Activated T-helper 1 cell treated with anti-CD3 and anti-CD28 coated beads, Interleukin-12 subunit alpha, Interleukin-12 subunit beta, Interleukin-2, Interleukin-4 antibody, amounts not matched to agents 30 ng/mL and 10 ng/mL and 1 ng/mL, durations not matched to agents 14 hours and 24 hours and 36 hours (primary cell): ENCODE measurements at regions of chr1 and their contacts with region 1.

Region 1: DNA sequence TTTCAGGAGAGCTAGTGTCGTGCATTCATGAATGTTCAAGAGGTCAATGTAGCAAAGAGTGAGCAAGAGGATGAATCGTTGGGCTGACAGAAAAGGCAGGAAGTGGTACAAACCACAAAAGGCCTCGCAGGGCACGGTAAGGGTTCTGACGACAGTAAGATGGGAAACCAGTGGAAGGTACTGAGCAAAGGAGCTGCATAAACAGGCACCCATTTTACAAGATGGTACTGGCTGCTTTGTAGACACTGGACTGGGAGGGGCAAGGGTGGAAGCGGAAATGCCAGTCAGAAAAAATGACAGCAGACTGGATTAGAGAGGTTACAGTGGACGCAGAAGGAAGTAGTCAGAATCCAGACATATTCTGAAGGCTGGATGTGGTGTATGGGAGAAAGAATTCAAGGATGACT is 123.5 kb downstream of the PTPN14 start:
- DNase-seq: peak; percentile 77
- H3K4me3 Mint-ChIP-seq: peak overlapping the region; percentile 56
- H3K27ac Mint-ChIP-seq: peak overlapping the region; percentile 98
- H3K4me1 Mint-ChIP-seq: peaks cover 53% of the 10 kb centered on the region
- H3K27me3 Mint-ChIP-seq: no peaks in the 10 kb centered on the region

Region 2: GRCh38 chr1:214281021-214281719 is 146.7 kb before region 1 on chr1 and contains the start of gene SMYD2:
- intact Hi-C with region 1: loop called (anchors 5 kb)
- DNase-seq: peak; percentile 59
- H3K4me3 Mint-ChIP-seq: peak within 1 kb of the TSS; percentile 94
- H3K27ac Mint-ChIP-seq: peak within 1 kb of the TSS; percentile 92
- H3K4me1 Mint-ChIP-seq: peaks cover 42% of the 10 kb centered on the region
- H3K27me3 Mint-ChIP-seq: peaks cover 2% of the 10 kb centered on the region
- total RNA-seq, gene SMYD2: 25.7 and 26.8 TPM in 2 replicates

Region 3: DNA sequence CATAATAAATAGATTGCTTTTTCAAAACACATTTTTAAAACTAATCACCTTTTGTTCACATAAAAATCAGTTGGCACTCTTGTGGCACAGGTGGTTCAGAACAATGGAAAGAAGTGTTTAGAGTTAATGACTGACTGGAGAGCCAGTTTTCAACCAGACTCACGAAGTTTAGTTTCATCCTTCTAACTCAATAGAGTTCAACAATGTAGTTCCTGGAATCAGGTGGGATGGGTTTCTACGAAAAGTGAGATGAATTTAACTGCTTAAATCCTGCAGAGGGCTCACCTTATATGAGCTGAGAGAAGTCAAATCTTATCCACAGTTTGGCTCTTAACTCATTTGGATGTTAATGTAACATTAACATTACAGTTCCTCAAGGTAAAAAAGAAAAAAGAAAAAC is 30.4 kb before region 1 on chr1:
- intact Hi-C with region 1: loop called (anchors 2 kb)
- DNase-seq: no peak
- H3K4me3 Mint-ChIP-seq: no peak overlapping the region
- H3K27ac Mint-ChIP-seq: peak overlapping the region; percentile 68
- H3K4me1 Mint-ChIP-seq: peaks cover 44% of the 10 kb centered on the region
- H3K27me3 Mint-ChIP-seq: no peaks in the 10 kb centered on the region

Region 4: GRCh38 chr1:214413315-214413714 is 14.6 kb before region 1 on chr1:
- intact Hi-C with region 1: loop called (anchors 2 kb)
- DNase-seq: no peak
- H3K4me3 Mint-ChIP-seq: no peak overlapping the region
- H3K27ac Mint-ChIP-seq: no peak overlapping the region
- H3K4me1 Mint-ChIP-seq: peaks cover 34% of the 10 kb centered on the region
- H3K27me3 Mint-ChIP-seq: peaks cover 3% of the 10 kb centered on the region

Region 5: DNA sequence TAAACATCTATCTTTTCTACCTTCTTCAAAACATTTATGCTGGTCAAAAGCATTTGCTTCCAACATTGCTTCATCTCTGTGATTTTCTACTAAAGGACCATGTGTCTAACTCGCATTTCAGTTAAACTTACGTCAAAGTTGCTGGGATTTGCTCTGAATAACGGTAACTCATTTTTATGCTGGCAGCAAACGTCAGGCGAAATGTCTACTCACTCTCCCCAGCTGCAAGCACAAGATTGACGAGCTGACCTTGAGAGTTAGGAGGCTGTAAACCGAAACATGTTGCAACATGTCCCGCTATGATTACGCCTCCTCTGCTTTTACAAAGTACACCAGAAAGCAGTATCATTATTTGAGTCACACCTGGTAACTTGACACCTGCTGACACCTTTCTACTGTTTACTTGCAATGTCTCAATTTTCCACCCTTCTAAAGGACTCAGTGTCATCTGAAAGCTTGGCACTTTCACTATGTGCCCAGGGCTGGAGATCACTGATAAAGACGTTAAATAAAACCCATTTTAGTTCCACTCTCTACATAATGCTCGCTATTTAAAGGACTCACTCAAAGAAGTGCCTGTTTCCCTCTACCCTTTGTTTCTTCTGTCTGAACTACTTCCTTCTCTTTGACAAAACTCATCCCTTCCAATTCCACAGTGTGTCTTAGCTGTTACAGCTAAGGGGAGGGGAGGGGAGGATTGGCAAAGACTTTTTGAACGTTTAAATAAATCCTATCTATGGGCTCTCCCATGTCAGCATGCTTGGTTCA is 11.7 kb after region 1 on chr1:
- intact Hi-C with region 1: loop called (anchors 1 kb)
- DNase-seq: peak; percentile 52
- H3K4me3 Mint-ChIP-seq: peak overlapping the region; percentile 66
- H3K27ac Mint-ChIP-seq: peak overlapping the region; percentile 95
- H3K4me1 Mint-ChIP-seq: peaks cover 64% of the 10 kb centered on the region
- H3K27me3 Mint-ChIP-seq: no peaks in the 10 kb centered on the region

Region 6: DNA sequence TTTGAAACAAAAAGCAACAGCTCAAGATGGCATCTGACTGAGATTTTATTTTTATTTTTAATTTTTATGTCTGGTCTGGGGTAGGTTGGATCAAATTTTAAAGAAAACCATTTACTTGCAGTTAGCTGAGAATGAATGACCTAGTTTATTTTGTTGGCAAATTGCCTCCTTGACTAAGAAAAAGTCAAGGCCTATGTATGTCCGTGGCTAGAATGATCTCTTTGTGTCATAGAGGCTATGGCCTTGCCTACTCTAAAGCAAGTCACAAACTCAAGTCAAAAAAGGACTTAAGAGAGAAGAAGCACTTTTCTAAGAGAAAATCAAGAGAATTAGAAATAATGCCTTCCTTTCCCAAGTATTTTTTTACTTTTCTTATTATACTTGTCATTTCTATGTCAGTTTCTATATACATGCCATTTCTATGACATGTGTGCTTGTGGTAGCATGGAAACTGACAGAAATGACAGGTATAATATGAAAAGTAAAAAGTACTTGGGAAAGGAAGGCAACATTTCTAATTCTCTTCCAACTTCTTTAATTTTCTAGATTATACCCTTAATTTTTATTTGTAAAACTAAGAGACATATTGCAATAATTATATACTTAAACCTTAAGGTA is 311.9 kb after region 1 on chr1:
- intact Hi-C with region 1: no loop called
- DNase-seq: no peak
- H3K4me3 Mint-ChIP-seq: no peak overlapping the region
- H3K27ac Mint-ChIP-seq: no peak overlapping the region
- H3K4me1 Mint-ChIP-seq: no peaks in the 10 kb centered on the region
- H3K27me3 Mint-ChIP-seq: no peaks in the 10 kb centered on the region